Naive thymus-derived CD4-positive, alpha-beta T cell (primary cell): ENCODE measurements at regions of chr4 and their contacts with region 1.

Region 1: GRCh38 chr4:102610007-102610406 is 108.8 kb downstream of the NFKB1 start:
- DNase-seq: no peak
- ATAC-seq: no peak
- H3K4me3 ChIP-seq: no peak overlapping the region
- H3K4me3 Mint-ChIP-seq: peak overlapping the region in 1 of 10 donors; percentile 5
- H3K27ac ChIP-seq: no peak overlapping the region
- H3K27ac Mint-ChIP-seq: peak overlapping the region; percentile 10 to 97 (median 76)
- H3K4me1 ChIP-seq: peaks cover 38% of the 10 kb centered on the region in 2 donors
- H3K4me1 Mint-ChIP-seq: peaks cover 30 to 85% (median 67%) of the 10 kb centered on the region in 7 donors
- H3K27me3 ChIP-seq: no peaks in the 10 kb centered on the region
- H3K27me3 Mint-ChIP-seq: no peaks in the 10 kb centered on the region

Region 2: DNA sequence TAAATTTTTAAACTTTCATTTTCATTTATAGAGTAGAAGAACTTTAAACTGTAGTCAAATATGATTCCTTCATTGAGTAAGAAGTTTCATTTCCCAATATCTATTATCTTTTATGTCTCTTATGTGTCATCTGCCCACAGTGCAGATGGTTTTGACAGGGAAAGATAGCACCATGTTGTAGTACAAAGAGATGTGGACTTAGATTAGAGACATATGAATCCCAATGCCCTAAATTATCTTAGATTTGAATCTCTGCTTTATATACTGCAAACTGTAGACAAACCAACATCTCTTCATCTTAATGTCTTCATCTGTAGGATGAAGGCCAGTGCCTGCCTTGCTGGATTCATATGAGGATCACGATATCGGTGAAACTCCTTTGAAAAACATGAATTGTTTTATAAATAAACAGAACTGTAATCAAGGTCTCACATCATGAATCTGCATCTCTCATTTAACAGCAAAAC is 602.0 kb before region 1 on chr4:
- CTCF ChIA-PET with region 1: no interaction called
- POLR2A ChIA-PET with region 1: no interaction called
- intact Hi-C with region 1: no loop called
- DNase-seq: no peak
- ATAC-seq: no peak
- H3K4me3 ChIP-seq: no peak overlapping the region
- H3K4me3 Mint-ChIP-seq: no peak overlapping the region
- H3K27ac ChIP-seq: no peak overlapping the region
- H3K27ac Mint-ChIP-seq: no peak overlapping the region
- H3K4me1 ChIP-seq: no peaks in the 10 kb centered on the region
- H3K4me1 Mint-ChIP-seq: peaks cover 0 to 5% (median 2%) of the 10 kb centered on the region in 7 donors
- H3K27me3 ChIP-seq: no peaks in the 10 kb centered on the region
- H3K27me3 Mint-ChIP-seq: peaks cover 0 to 5% (median 0%) of the 10 kb centered on the region in 5 donors

Region 3: GRCh38 chr4:102578819-102579218 is 31.2 kb before region 1 on chr4:
- CTCF ChIA-PET with region 1: no interaction called
- POLR2A ChIA-PET with region 1: interaction called, 9 read pairs
- intact Hi-C with region 1: loop called (anchors 5 kb)
- DNase-seq: peak in 2 of 9 donors; percentile 9 to 23
- ATAC-seq: no peak
- H3K4me3 ChIP-seq: no peak overlapping the region
- H3K4me3 Mint-ChIP-seq: peak overlapping the region in 3 of 10 donors; percentile 12 to 16 (median 14)
- H3K27ac ChIP-seq: no peak overlapping the region
- H3K27ac Mint-ChIP-seq: peak overlapping the region in 8 of 9 donors; percentile 29 to 69 (median 56)
- H3K4me1 ChIP-seq: peaks cover 7 to 41% of the 10 kb centered on the region in 2 donors
- H3K4me1 Mint-ChIP-seq: peaks cover 30 to 83% (median 75%) of the 10 kb centered on the region in 7 donors
- H3K27me3 ChIP-seq: no peaks in the 10 kb centered on the region
- H3K27me3 Mint-ChIP-seq: no peaks in the 10 kb centered on the region

Region 4: GRCh38 chr4:102598086-102598761 is 11.8 kb before region 1 on chr4:
- CTCF ChIA-PET with region 1: no interaction called
- POLR2A ChIA-PET with region 1: interaction called, 11 read pairs
- intact Hi-C with region 1: loop called (anchors 1 kb)
- DNase-seq: peak in 7 of 9 donors; percentile 56 to 87 (median 79)
- ATAC-seq: peak; percentile 95
- H3K4me3 ChIP-seq: no peak overlapping the region
- H3K4me3 Mint-ChIP-seq: peak overlapping the region; percentile 8 to 86 (median 54)
- H3K27ac ChIP-seq: peak overlapping the region; percentile 51
- H3K27ac Mint-ChIP-seq: peak overlapping the region; percentile 78 to 94 (median 86)
- H3K4me1 ChIP-seq: peaks cover 27 to 45% of the 10 kb centered on the region in 2 donors
- H3K4me1 Mint-ChIP-seq: peaks cover 31 to 86% (median 74%) of the 10 kb centered on the region in 7 donors
- H3K27me3 ChIP-seq: no peaks in the 10 kb centered on the region
- H3K27me3 Mint-ChIP-seq: no peaks in the 10 kb centered on the region

Region 5: GRCh38 chr4:102627831-102628523 is 18.0 kb after region 1 on chr4:
- CTCF ChIA-PET with region 1: interaction called, 10 read pairs
- POLR2A ChIA-PET with region 1: interaction called, 4 read pairs
- intact Hi-C with region 1: loop called in 1 of 2 experiments (anchors 1 kb)
- DNase-seq: no peak
- ATAC-seq: no peak
- H3K4me3 ChIP-seq: no peak overlapping the region
- H3K4me3 Mint-ChIP-seq: peak overlapping the region in 4 of 10 donors; percentile 16 to 92 (median 58)
- H3K27ac ChIP-seq: no peak overlapping the region
- H3K27ac Mint-ChIP-seq: peak overlapping the region in 7 of 9 donors; percentile 15 to 100 (median 87)
- H3K4me1 ChIP-seq: peaks cover 29 to 42% of the 10 kb centered on the region in 2 donors
- H3K4me1 Mint-ChIP-seq: peaks cover 29 to 91% (median 65%) of the 10 kb centered on the region in 7 donors
- H3K27me3 ChIP-seq: no peaks in the 10 kb centered on the region
- H3K27me3 Mint-ChIP-seq: no peaks in the 10 kb centered on the region